GM23248 (cell line): ENCODE measurements at regions of chr17 and their contacts with region 1.

Region 1: GRCh38 chr17:20315821-20316220 is 151.5 kb downstream of the LGALS9B start:
- DNase-seq: no peak
- H3K4me3 ChIP-seq: no peak overlapping the region
- H3K27ac ChIP-seq: no peak overlapping the region
- H3K4me1 ChIP-seq: no peaks in the 10 kb centered on the region
- H3K27me3 ChIP-seq: no peaks in the 10 kb centered on the region

Region 2: GRCh38 chr17:20133517-20133916 is 182.3 kb before region 1 on chr17:
- in situ Hi-C with region 1: loop called (anchors 10 kb)
- DNase-seq: no peak
- H3K4me3 ChIP-seq: no peak overlapping the region
- H3K27ac ChIP-seq: no peak overlapping the region
- H3K4me1 ChIP-seq: peaks cover under 1% of the 10 kb centered on the region; the same call in 1 of the 2 replicates
- H3K27me3 ChIP-seq: peaks cover 34% of the 10 kb centered on the region

Region 3: DNA sequence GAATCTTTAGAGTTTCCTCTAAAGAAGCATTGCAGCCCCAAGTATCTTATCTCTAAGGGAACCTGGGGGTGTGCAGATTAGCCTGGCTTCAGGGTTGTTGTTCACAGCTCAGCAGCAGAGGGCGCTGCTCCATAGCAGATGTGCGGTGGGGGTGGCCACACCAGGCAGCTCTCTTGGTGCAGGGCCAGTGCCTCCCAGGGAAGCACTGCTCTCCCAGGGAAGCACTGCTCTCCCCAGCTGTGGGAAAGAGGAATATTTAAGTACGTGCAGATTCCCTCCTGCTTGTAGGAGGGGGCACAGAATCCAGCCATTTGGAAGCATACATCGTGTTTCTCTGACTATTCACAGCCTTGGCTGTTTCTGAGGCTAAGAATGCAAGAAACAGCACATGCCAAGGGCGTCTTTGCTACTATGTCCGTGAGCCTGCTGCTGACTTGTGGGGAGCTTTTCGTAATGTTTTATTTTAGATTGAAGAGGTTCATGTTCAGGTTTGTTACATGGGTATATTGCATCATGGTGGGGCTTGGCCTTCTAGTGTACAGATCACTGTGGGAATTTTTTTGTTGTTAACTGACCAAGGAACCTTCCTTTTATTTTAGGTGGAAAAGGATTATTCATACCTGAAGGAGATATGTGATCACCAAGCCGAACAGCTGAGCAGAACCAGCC is 88.9 kb before region 1 on chr17:
- in situ Hi-C with region 1: loop called (anchors 10 kb)
- DNase-seq: peak; percentile 89
- H3K4me3 ChIP-seq: no peak overlapping the region
- H3K27ac ChIP-seq: no peak overlapping the region
- H3K4me1 ChIP-seq: peaks cover 5% of the 10 kb centered on the region; the same call in 1 of the 2 replicates
- H3K27me3 ChIP-seq: no peaks in the 10 kb centered on the region

Region 4: GRCh38 chr17:20721171-20721570 is 405.4 kb after region 1 on chr17:
- in situ Hi-C with region 1: no loop called
- DNase-seq: peak; percentile 24
- H3K4me3 ChIP-seq: no peak overlapping the region
- H3K27ac ChIP-seq: no peak overlapping the region
- H3K4me1 ChIP-seq: no peaks in the 10 kb centered on the region
- H3K27me3 ChIP-seq: 0 out of 2 replicates have a peak, but pooled peaks cover 5% of the 10 kb centered on the region